Common myeloid progenitor, CD34-positive (primary cell): ENCODE measurements at regions of chr1 and their contacts with region 1.

Region 1: DNA sequence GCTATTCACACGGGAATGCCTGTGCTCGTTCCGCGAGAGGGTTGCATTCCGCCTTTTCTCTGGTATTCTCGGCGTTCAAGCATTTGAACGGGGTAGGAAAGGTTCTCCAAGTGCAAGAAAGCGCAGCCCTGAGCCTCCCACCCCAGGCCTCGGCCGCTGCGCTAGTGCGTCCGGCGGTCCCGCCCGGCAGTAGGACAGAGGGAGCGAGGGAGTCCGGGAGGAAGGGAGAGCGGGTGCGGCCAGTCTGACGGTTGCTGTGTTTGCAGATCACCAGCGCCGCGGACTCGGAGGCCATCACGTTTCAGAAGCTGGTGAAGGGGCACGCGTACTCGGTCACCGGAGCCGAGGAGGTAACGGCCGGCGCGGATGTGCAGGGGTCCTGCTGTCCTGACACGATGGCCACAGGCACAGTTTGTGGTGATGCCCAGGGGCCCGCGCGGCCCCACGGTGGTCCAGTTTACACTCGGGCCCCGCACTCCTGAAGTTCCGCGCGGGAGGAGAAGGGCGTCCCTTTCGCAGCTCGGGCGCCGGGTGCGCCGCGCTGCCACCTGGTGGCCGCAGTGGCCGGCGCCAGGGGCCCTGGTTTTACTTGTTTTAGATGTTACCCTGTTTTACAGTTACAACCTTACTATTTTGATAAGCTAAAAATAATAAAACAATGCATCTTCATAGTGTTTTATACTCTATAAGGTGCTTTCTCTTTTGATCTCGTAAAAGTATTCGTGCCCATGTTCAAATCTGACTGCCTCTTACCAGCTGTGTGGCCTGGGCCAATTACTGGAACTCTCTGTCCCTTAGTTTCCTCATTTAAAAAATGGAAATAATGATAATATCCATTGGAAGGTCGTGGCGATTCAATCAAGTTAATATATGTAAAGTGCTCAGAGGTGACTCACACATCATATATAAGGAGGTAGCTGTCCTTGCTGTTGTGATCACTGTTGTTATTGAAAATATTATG is 36.7 kb downstream of the CAPN2 start:
- DNase-seq: peak; percentile 46 to 72 (median 72)
- H3K4me3 ChIP-seq: peak overlapping the region; percentile 24 to 85 (median 67)
- H3K27ac ChIP-seq: no peak overlapping the region
- H3K4me1 ChIP-seq: peaks cover 0 to 8% (median 6%) of the 10 kb centered on the region in 4 experiments
- H3K27me3 ChIP-seq: peaks cover 0 to 2% (median 0%) of the 10 kb centered on the region in 5 experiments

Region 2: DNA sequence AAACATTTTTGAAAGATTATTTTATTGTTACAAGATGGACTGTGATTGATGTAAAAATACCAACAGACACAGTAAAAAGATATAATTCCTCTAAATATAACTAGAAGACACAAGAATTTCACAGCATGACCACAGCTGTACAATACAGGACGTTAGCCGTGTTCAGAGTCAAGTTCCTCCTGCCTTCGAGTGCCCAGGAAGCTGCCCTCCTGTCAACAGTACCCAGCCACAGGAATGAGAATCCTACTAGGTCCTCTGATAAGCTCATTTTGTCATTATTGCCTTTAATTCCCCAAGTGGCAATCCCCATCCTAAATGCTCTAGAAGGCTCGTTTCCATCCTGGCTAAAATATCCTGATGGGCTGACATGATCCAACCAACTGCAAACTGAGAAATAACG is 53.1 kb before region 1 on chr1:
- CTCF ChIA-PET with region 1: interaction called, 98 read pairs
- POLR2A ChIA-PET with region 1: no interaction called
- DNase-seq: no peak
- H3K4me3 ChIP-seq: no peak overlapping the region
- H3K27ac ChIP-seq: no peak overlapping the region
- H3K4me1 ChIP-seq: no peaks in the 10 kb centered on the region
- H3K27me3 ChIP-seq: no peaks in the 10 kb centered on the region

Region 3: GRCh38 chr1:223712194-223712849 is 36.7 kb before region 1 on chr1 and contains the start of gene CAPN2:
- CTCF ChIA-PET with region 1: interaction called, 57 read pairs
- POLR2A ChIA-PET with region 1: interaction called, 5 read pairs
- DNase-seq: peak; percentile 72 to 80 (median 76)
- H3K4me3 ChIP-seq: peak within 1 kb of the TSS; percentile 44 to 82 (median 68)
- H3K27ac ChIP-seq: peak within 1 kb of the TSS in 1 of 2 experiments; percentile 60
- H3K4me1 ChIP-seq: peaks cover 0 to 35% (median 27%) of the 10 kb centered on the region in 4 experiments
- H3K27me3 ChIP-seq: peaks cover 0 to 2% (median 0%) of the 10 kb centered on the region in 5 experiments

Region 4: DNA sequence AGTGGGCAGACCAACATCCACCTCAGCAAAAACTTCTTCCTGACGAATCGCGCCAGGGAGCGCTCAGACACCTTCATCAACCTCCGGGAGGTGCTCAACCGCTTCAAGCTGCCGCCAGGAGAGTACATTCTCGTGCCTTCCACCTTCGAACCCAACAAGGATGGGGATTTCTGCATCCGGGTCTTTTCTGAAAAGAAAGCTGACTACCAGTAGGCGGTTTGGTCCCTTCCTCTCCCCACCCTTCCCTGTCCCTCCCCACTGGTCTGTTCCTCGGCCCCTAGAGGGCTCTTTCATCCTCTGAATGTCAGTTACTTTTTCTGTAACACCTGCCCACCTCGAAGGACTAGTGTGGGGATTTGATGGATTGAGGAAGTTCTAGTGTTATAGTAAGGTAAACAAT is 10.2 kb after region 1 on chr1:
- CTCF ChIA-PET with region 1: interaction called, 15 read pairs
- POLR2A ChIA-PET with region 1: no interaction called
- DNase-seq: no peak
- H3K4me3 ChIP-seq: no peak overlapping the region
- H3K27ac ChIP-seq: no peak overlapping the region
- H3K4me1 ChIP-seq: no peaks in the 10 kb centered on the region
- H3K27me3 ChIP-seq: no peaks in the 10 kb centered on the region

Region 5: GRCh38 chr1:223780949-223781348 is 31.9 kb after region 1 on chr1:
- CTCF ChIA-PET with region 1: interaction called, 13 read pairs
- POLR2A ChIA-PET with region 1: no interaction called
- DNase-seq: no peak
- H3K4me3 ChIP-seq: no peak overlapping the region
- H3K27ac ChIP-seq: no peak overlapping the region
- H3K4me1 ChIP-seq: peaks cover 0 to 7% (median 5%) of the 10 kb centered on the region in 4 experiments
- H3K27me3 ChIP-seq: no peaks in the 10 kb centered on the region